Posterior vena cava (tissue), 2 donors: ENCODE measurements at regions of chr3 and their contacts with region 1.

Region 1: GRCh38 chr3:54691289-54691771 is 236.5 kb downstream of the LRTM1 start:
- DNase-seq: no peak

Region 2: GRCh38 chr3:54235998-54236397 is 455.3 kb before region 1 on chr3:
- intact Hi-C with region 1: no loop called
- DNase-seq: no peak

Region 3: GRCh38 chr3:54670201-54671000 is 20.9 kb before region 1 on chr3:
- intact Hi-C with region 1: loop called in 1 of 2 experiments (anchors 1 kb)
- DNase-seq: no peak

Region 4: GRCh38 chr3:56111606-56112304 is 1420.4 kb after region 1 on chr3:
- intact Hi-C with region 1: loop called in 1 of 2 experiments (anchors 5 kb)
- DNase-seq: no peak